ENCODE measurements at regions of chr3 and their contacts with region 1.

Region 1: DNA sequence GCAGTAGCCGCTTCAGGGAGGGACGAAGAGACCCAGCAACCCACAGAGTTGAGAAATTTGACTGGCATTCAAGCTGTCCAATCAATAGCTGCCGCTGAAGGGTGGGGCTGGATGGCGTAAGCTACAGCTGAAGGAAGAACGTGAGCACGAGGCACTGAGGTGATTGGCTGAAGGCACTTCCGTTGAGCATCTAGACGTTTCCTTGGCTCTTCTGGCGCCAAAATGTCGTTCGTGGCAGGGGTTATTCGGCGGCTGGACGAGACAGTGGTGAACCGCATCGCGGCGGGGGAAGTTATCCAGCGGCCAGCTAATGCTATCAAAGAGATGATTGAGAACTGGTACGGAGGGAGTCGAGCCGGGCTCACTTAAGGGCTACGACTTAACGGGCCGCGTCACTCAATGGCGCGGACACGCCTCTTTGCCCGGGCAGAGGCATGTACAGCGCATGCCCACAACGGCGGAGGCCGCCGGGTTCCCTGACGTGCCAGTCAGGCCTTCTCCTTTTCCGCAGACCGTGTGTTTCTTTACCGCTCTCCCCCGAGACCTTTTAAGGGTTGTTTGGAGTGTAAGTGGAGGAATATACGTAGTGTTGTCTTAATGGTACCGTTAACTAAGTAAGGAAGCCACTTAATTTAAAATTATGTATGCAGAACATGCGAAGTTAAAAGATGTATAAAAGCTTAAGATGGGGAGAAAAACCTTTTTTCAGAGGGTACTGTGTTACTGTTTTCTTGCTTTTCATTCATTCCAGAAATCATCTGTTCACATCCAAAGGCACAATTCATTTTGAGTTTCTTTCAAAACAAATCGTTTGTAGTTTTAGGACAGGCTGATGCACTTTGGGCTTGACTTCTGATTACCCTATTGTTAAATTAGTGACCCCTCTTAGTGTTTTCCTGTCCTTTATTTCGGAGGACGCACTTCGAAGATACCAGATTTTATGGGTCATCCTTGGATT is at the start of gene MLH1:
- DNase-seq: peak; percentile 84
- H3K4me3 ChIP-seq: peak within 1 kb of the TSS; percentile 81 to 94
- H3K27ac ChIP-seq: peak within 1 kb of the TSS; percentile 95 to 98
- H3K4me1 ChIP-seq: peaks cover 28 to 29% of the 10 kb centered on the region in 2 experiments; a peak in 3 of 4 replicates
- H3K27me3 ChIP-seq: no peaks in the 10 kb centered on the region
- CTCF ChIP-seq: no peak
- EP300 ChIP-seq: no peak; a peak in 2 of 4 replicates
- RAD21 ChIP-seq: 0 out of 2 replicates have a peak, but pooled peaks have one; percentile 7
- polyA plus RNA-seq, gene MLH1: 24.0 and 30.2 TPM in 2 replicates

Region 2: DNA sequence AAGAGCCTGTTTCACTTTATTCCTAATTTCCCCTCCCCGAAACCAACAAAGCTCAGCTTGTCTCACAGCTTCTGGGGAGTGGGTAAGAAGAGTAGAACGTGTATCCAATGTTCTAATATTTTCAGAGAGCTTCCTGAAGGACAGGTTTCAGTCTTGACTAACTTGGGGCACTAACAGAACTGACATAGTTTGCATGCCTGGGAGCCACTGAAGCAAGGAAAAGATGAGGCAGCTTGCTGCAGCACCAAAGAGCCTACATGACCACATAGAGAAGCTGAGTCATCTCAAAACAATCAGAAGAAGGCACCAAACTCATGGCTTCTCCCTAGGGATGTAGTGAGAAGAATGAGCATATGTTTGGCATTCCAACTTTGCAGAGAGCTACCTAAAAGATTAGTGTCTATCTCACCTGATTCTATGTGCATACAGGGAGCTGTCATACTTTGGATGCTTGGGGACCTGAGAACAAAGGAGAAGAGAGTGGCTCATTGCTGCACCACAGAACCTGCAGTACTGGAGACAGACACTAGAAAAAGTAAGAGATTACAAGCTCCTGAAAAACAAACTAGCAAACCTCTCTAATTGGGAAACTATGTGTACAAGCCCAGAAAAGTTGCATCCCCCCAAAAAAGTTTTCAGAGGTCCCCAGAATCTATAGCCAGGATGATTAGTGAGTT is 316.1 kb before region 1 on chr3:
- CTCF ChIA-PET with region 1: no interaction called
- POLR2A ChIA-PET with region 1: no interaction called
- DNase-seq: no peak
- H3K4me3 ChIP-seq: no peak overlapping the region
- H3K27ac ChIP-seq: peak overlapping the region in 1 of 2 experiments; percentile 34; a peak in 1 of 4 replicates
- H3K4me1 ChIP-seq: no peaks in the 10 kb centered on the region
- H3K27me3 ChIP-seq: no peaks in the 10 kb centered on the region
- CTCF ChIP-seq: no peak
- EP300 ChIP-seq: peak in 1 of 2 experiments; percentile 20; a peak in 1 of 4 replicates
- RAD21 ChIP-seq: no peak

Region 3: GRCh38 chr3:36969540-36970432 is 23.8 kb before region 1 on chr3:
- CTCF ChIA-PET with region 1: interaction called, 3 read pairs
- POLR2A ChIA-PET with region 1: interaction called, 12 read pairs
- DNase-seq: peak; percentile 88
- H3K4me3 ChIP-seq: no peak overlapping the region
- H3K27ac ChIP-seq: peak overlapping the region; percentile 36 to 91; a peak in 3 of 4 replicates
- H3K4me1 ChIP-seq: peaks cover 10 to 13% of the 10 kb centered on the region in 2 experiments; a peak in 3 of 4 replicates
- H3K27me3 ChIP-seq: no peaks in the 10 kb centered on the region
- CTCF ChIP-seq: no peak
- EP300 ChIP-seq: peak in 1 of 2 experiments; percentile 53; a peak in 1 of 4 replicates
- RAD21 ChIP-seq: peak; percentile 38; the same call in 1 of the 2 replicates

Region 4: DNA sequence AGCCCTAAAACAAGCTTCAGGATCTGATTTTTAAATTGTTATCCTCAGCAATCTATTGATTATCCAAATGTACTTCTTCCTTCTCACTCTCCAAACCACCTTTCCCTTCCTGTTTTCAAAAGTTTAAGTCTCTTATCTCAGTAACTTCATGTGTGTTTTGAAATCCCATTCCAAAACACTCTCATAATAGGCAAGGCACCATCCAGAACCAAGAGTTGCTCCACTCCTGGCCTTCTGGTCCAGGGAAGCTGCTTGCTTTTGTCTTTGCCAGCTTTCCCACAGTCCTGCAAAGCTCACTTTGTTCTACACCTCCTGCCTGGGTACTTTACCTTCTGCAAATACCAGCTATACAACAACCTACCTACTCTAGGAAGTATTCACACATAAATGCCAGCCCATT is 63.2 kb after region 1 on chr3:
- CTCF ChIA-PET with region 1: no interaction called
- POLR2A ChIA-PET with region 1: no interaction called
- DNase-seq: no peak
- H3K4me3 ChIP-seq: no peak overlapping the region
- H3K27ac ChIP-seq: no peak overlapping the region
- H3K4me1 ChIP-seq: peaks cover 3 to 25% of the 10 kb centered on the region in 2 experiments
- H3K27me3 ChIP-seq: no peaks in the 10 kb centered on the region
- CTCF ChIP-seq: no peak
- EP300 ChIP-seq: no peak
- RAD21 ChIP-seq: no peak

Region 5: GRCh38 chr3:37291275-37291700 is 297.7 kb after region 1 on chr3:
- CTCF ChIA-PET with region 1: no interaction called
- POLR2A ChIA-PET with region 1: no interaction called
- DNase-seq: no peak
- H3K4me3 ChIP-seq: no peak overlapping the region
- H3K27ac ChIP-seq: peak overlapping the region; percentile 17 to 87; a peak in 3 of 4 replicates
- H3K4me1 ChIP-seq: peaks cover 0 to 41% of the 10 kb centered on the region in 2 experiments; a peak in 3 of 4 replicates
- H3K27me3 ChIP-seq: no peaks in the 10 kb centered on the region
- CTCF ChIP-seq: no peak
- EP300 ChIP-seq: no peak
- RAD21 ChIP-seq: no peak